ENCODE measurements at regions of chr4 and their contacts with region 1.

Region 1: DNA sequence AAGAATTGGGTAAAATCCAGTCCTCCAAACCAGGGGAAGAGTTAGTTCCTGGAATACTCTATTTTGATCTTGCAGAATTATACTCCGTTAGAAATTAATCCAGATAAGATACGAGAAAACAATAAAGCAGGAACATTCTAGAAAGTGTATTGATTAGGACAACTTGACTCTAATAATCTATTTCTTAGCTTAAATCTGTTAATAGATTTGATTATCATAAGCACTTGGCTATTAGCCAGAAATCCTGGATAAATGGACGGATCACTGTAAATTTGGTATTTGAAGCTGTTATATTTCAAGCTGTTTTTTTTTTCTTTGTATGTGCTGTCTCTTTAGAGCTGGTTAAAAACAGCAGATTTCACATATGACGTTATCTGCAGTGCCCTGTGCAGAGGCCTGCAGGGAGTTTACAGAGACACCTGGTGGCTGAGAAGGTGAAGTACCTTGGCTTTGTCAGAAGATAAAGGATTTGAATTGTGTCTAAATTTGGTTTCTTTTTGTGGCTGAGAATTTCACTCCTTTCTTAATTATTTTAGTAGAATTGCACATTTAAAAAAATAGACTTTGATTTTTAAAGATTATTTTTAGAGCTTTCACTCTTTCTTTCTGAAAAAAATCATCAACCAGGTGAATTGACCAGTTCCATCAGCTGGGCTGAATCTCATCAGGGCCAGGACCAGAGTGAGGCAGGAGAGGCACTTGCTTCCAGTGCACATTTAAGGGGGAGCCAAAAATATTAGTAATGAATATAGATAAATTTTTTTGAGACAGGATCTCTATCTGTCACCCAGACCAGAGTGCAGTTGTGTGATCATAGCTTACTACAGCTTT is 9.7 kb upstream of the CHRNA9 start:
- DNase-seq: peak; percentile 38 to 84 (median 70)
- H3K4me3 ChIP-seq: no peak overlapping the region
- H3K4me3 Mint-ChIP-seq: no peak overlapping the region
- H3K27ac ChIP-seq: no peak overlapping the region
- H3K27ac Mint-ChIP-seq: peak overlapping the region in 6 of 8 donors; percentile 5 to 76 (median 61)
- H3K4me1 ChIP-seq: peaks cover 5% of the 10 kb centered on the region
- H3K4me1 Mint-ChIP-seq: peaks cover 6 to 7% (median 7%) of the 10 kb centered on the region in 3 donors
- H3K27me3 ChIP-seq: no peaks in the 10 kb centered on the region
- H3K27me3 Mint-ChIP-seq: peaks cover 1 to 8% of the 10 kb centered on the region in 2 donors

Region 2: DNA sequence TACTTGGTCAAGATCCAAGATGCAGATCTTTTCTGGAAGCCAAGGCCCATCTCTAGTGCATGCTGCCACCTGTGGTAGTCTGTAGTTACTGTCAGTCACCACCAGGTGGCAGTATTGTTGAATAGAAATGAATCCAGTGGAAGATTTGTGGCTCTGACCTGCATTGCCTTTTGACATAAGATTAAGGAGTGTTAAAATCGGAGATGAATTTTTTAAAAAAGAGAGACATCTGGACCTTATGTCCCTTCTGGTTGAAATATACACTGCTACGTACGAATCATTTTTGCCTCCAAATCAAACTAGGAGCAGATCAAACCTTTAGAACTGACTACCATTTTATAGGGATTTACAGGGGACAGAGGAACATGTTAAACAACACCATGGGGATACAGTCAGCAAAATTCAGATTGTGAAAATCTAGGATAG is 175.4 kb before region 1 on chr4:
- CTCF ChIA-PET with region 1: interaction called, 49 read pairs
- POLR2A ChIA-PET with region 1: no interaction called
- DNase-seq: peak; percentile 51 to 79 (median 70)
- H3K4me3 ChIP-seq: no peak overlapping the region
- H3K4me3 Mint-ChIP-seq: no peak overlapping the region
- H3K27ac ChIP-seq: no peak overlapping the region
- H3K27ac Mint-ChIP-seq: peak overlapping the region; percentile 33 to 90 (median 60)
- H3K4me1 ChIP-seq: peaks cover 20% of the 10 kb centered on the region
- H3K4me1 Mint-ChIP-seq: peaks cover 22 to 37% (median 34%) of the 10 kb centered on the region in 3 donors
- H3K27me3 ChIP-seq: no peaks in the 10 kb centered on the region
- H3K27me3 Mint-ChIP-seq: no peaks in the 10 kb centered on the region

Region 3: DNA sequence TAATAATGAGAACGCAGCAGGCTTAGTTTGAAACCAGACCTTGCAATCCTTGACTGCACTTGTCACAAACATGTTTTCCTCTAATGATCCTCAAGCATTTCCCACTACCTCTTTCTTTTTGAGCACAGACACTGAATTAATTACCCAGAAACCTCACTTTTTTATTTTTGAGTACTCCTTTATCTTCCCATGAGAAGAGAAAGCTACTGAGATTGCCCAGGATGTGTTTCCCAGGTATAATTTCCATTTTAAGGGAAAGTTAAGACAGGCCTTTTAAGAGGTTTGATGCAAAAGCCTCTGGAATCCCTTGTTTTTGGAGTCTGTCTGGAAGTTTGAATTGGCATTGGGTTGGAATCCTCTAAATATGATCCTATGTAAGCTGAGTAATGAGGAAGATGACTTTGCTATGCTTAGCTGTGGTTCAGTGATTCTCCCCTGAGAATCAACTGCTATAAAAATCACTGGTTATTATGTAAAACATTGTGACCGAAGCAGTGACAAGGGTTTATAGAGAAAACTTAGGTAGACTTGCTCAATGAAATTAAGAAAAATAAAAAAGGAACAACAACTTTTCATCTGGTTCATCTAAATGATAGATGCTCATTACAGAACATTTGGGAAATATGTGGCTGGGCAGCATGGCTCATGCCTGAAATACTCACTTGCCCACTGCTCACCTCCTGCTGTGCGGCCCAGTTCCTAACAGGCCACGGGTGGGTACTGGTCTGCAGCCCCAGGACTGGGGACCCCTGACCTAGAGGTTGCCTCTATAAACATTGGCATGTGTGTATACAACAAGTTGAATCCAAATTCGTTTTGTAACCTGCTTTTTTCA is 139.4 kb before region 1 on chr4:
- CTCF ChIA-PET with region 1: interaction called, 24 read pairs
- POLR2A ChIA-PET with region 1: no interaction called
- DNase-seq: no peak
- H3K4me3 ChIP-seq: no peak overlapping the region
- H3K4me3 Mint-ChIP-seq: no peak overlapping the region
- H3K27ac ChIP-seq: no peak overlapping the region
- H3K27ac Mint-ChIP-seq: peak overlapping the region in 5 of 8 donors; percentile 21 to 60 (median 47)
- H3K4me1 ChIP-seq: peaks cover 31% of the 10 kb centered on the region
- H3K4me1 Mint-ChIP-seq: peaks cover 15 to 72% (median 21%) of the 10 kb centered on the region in 3 donors
- H3K27me3 ChIP-seq: no peaks in the 10 kb centered on the region
- H3K27me3 Mint-ChIP-seq: no peaks in the 10 kb centered on the region

Region 4: DNA sequence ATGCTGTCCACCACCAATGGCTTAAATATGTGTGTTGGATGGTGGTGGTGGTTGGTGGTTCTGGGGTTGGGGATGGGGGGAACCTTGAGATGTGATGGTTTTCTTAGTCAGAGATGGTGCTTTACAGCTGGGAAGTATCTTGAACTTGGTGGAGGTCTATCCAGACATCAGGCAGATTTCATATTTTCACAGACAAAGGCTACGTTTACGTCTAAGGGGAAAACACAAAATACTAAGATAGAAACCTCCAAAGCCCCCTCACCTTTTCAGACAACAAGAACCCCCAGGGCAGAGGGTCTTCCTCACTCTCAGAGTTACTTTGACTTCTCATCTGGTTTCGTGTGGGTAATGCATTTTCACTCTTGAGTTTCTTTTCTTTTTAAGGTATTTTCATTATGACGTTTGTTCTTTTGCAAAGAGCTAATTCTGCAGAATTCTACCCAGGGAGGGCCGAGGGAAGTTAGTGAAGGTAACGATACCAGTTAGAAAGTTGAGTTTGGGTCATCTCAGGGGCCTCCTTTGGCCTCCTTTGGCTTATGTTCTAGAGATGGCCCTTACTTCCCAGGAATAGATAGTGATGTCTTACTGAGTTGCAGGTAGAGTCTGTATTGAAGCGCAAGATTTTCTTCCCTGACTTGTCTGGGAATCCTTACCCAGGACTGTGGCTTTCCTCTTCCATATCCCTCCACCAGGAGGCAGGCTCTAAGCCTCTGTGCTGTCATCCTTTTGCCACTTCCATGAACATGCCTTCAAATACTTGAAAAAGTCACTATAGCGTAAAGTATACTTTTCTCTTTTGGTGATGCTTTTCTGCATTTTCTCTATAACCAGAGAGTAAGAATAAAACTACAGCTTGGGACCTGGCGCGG is 96.7 kb before region 1 on chr4:
- CTCF ChIA-PET with region 1: interaction called, 16 read pairs
- POLR2A ChIA-PET with region 1: no interaction called
- DNase-seq: no peak
- H3K4me3 ChIP-seq: peak overlapping the region; percentile 42
- H3K4me3 Mint-ChIP-seq: peak overlapping the region; percentile 78 to 88 (median 83)
- H3K27ac ChIP-seq: no peak overlapping the region
- H3K27ac Mint-ChIP-seq: peak overlapping the region; percentile 91 to 98 (median 95)
- H3K4me1 ChIP-seq: peaks cover 96% of the 10 kb centered on the region
- H3K4me1 Mint-ChIP-seq: peaks cover 83 to 100% (median 97%) of the 10 kb centered on the region in 3 donors
- H3K27me3 ChIP-seq: no peaks in the 10 kb centered on the region
- H3K27me3 Mint-ChIP-seq: peaks cover 0 to 1% of the 10 kb centered on the region in 2 donors

Region 5: DNA sequence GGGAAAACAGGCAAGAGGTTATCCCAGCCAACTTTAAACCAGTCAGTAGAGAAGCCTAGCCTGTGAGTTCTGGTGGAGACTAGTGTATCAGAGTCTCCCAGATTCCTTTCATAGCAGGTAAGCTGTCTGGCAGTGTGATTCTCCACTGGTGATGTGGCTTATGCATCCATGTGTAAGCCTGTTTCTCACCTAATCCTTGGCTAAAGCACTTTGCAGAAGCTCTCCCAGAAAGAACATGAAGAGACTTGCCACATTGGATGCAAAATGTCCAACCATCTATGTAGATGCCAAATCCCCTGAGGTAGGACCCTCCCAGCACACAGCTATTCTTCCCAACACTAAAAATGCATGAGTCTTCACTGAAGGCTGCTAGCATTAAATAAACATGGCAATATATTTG is 121.4 kb after region 1 on chr4:
- CTCF ChIA-PET with region 1: no interaction called
- POLR2A ChIA-PET with region 1: no interaction called
- DNase-seq: no peak
- H3K4me3 ChIP-seq: no peak overlapping the region
- H3K4me3 Mint-ChIP-seq: no peak overlapping the region
- H3K27ac ChIP-seq: no peak overlapping the region
- H3K27ac Mint-ChIP-seq: no peak overlapping the region
- H3K4me1 ChIP-seq: no peaks in the 10 kb centered on the region
- H3K4me1 Mint-ChIP-seq: peaks cover 1 to 4% (median 4%) of the 10 kb centered on the region in 3 donors
- H3K27me3 ChIP-seq: no peaks in the 10 kb centered on the region
- H3K27me3 Mint-ChIP-seq: peaks cover 0 to 2% of the 10 kb centered on the region in 2 donors